ENCODE measurements at regions of chr2 and their contacts with region 1.

Region 1: DNA sequence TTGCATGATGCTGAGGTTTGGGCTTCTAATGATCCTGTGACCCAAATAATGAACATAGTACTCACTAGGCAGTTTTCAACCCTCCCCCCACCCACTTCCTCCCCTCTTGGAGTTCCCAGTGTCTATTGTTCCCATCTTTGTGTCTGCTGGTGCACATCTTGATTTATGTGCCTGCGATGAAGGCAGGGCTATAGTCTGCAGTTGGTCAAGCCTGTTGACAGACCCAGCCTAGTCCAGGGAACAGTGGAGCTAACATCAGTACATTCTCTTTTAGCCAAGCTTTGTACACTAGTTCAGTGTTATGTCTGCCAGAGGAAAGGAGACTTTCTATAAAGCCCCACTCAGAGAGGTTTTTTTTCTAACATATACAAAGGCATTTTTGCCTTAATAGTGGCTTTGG is 287.6 kb downstream of the CPS1 start:
- DNase-seq: no peak
- H3K4me3 ChIP-seq: no peak overlapping the region
- H3K27ac ChIP-seq: no peak overlapping the region
- H3K4me1 ChIP-seq: no peaks in the 10 kb centered on the region
- H3K27me3 ChIP-seq: no peaks in the 10 kb centered on the region
- CTCF ChIP-seq: no peak
- POLR2A ChIP-seq: no peak

Region 2: GRCh38 chr2:210913461-210913860 is 69.4 kb after region 1 on chr2:
- intact Hi-C with region 1: loop called (anchors 2 kb)
- DNase-seq: no peak
- H3K4me3 ChIP-seq: no peak overlapping the region
- H3K27ac ChIP-seq: no peak overlapping the region
- H3K4me1 ChIP-seq: no peaks in the 10 kb centered on the region
- H3K27me3 ChIP-seq: no peaks in the 10 kb centered on the region
- CTCF ChIP-seq: no peak
- POLR2A ChIP-seq: no peak

Measured in breast epithelium (tissue), 4 donors.